GM12878 (cell line): ENCODE measurements at regions of chr16 and their contacts with region 1.

Region 1: DNA sequence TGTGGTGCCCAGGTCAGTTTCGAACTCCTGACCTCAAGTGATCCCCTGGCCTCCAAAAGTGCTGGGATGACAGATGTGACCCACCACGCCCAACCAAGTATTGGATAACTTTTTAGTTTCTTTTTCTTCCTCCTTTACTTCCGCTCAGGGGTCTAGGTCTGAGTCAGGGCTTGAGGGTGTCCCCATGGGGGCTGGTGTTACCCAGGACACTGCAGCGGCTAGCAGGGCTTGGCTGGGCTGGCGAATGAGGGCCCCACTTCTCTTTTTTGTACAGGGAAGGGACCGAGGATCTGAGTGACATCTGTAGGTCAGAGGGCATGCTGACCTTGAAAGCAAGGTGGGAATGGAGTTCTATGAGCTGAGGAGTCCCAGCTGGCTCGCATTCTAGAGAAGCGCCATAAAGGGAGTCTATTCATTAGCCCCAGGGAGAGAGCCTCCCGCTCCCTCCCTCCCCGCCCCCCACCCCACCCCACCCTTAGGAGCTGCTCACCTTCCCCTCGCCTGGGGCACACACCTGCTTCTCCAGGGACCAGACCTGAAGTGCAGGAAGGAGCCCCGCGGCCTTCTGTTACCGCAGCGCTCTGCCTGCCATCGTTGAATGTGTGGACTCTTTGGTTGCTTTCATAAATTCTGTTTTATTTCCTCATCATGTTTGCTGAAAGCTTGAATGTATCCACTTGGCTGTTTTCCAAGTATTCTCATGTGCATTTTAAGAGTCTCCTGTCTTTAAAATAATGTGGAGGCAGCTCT is 25.1 kb downstream of the RAB11FIP3 start:
- DNase-seq: peak; percentile 17
- ATAC-seq: peak; percentile 56
- H3K4me3 ChIP-seq: no peak overlapping the region
- H3K27ac ChIP-seq: peak overlapping the region; percentile 13; the same call in 1 of the 2 replicates
- H3K4me1 ChIP-seq: peaks cover 10% of the 10 kb centered on the region
- H3K27me3 ChIP-seq: no peaks in the 10 kb centered on the region
- CTCF ChIP-seq: no peak
- EP300 ChIP-seq: no peak
- POLR2A ChIP-seq: no peak
- RAD21 ChIP-seq: no peak

Region 2: GRCh38 chr16:414395-415169 is 36.0 kb before region 1 on chr16:
- CTCF ChIA-PET with region 1: no interaction called
- POLR2A ChIA-PET with region 1: no interaction called
- RAD21 ChIA-PET with region 1: no interaction called
- SMC1A ChIA-PET with region 1: no interaction called
- in situ Hi-C with region 1: no loop called
- intact Hi-C with region 1: no loop called
- DNase-seq: no peak
- ATAC-seq: no peak
- H3K4me3 ChIP-seq: no peak overlapping the region
- H3K27ac ChIP-seq: no peak overlapping the region
- H3K4me1 ChIP-seq: no peaks in the 10 kb centered on the region
- H3K27me3 ChIP-seq: no peaks in the 10 kb centered on the region
- CTCF ChIP-seq: no peak
- EP300 ChIP-seq: no peak
- POLR2A ChIP-seq: no peak
- RAD21 ChIP-seq: no peak

Region 3: GRCh38 chr16:426906-427249 is 23.7 kb before region 1 on chr16:
- CTCF ChIA-PET with region 1: interaction called, 3 read pairs
- POLR2A ChIA-PET with region 1: no interaction called
- RAD21 ChIA-PET with region 1: no interaction called
- SMC1A ChIA-PET with region 1: no interaction called
- in situ Hi-C with region 1: no loop called
- intact Hi-C with region 1: loop called (anchors 1 kb)
- DNase-seq: no peak
- ATAC-seq: no peak
- H3K4me3 ChIP-seq: peak overlapping the region; percentile 76
- H3K27ac ChIP-seq: no peak overlapping the region
- H3K4me1 ChIP-seq: peaks cover 15% of the 10 kb centered on the region
- H3K27me3 ChIP-seq: peaks cover 0 to 3% of the 10 kb centered on the region in 2 experiments; a peak in 1 of 4 replicates
- CTCF ChIP-seq: no peak
- EP300 ChIP-seq: no peak
- POLR2A ChIP-seq: no peak
- RAD21 ChIP-seq: no peak

Region 4: GRCh38 chr16:1325673-1326371 is 875.3 kb after region 1 on chr16:
- CTCF ChIA-PET with region 1: no interaction called
- POLR2A ChIA-PET with region 1: interaction called, 14 read pairs
- RAD21 ChIA-PET with region 1: no interaction called
- SMC1A ChIA-PET with region 1: no interaction called
- in situ Hi-C with region 1: no loop called
- intact Hi-C with region 1: no loop called
- DNase-seq: no peak
- ATAC-seq: peak; percentile 33
- H3K4me3 ChIP-seq: no peak overlapping the region
- H3K27ac ChIP-seq: no peak overlapping the region
- H3K4me1 ChIP-seq: peaks cover 3% of the 10 kb centered on the region; the same call in 1 of the 2 replicates
- H3K27me3 ChIP-seq: no peaks in the 10 kb centered on the region
- CTCF ChIP-seq: no peak
- EP300 ChIP-seq: no peak
- POLR2A ChIP-seq: peak; percentile 69
- RAD21 ChIP-seq: no peak